ENCODE measurements at regions of chr1 and their contacts with region 1.

Region 1: DNA sequence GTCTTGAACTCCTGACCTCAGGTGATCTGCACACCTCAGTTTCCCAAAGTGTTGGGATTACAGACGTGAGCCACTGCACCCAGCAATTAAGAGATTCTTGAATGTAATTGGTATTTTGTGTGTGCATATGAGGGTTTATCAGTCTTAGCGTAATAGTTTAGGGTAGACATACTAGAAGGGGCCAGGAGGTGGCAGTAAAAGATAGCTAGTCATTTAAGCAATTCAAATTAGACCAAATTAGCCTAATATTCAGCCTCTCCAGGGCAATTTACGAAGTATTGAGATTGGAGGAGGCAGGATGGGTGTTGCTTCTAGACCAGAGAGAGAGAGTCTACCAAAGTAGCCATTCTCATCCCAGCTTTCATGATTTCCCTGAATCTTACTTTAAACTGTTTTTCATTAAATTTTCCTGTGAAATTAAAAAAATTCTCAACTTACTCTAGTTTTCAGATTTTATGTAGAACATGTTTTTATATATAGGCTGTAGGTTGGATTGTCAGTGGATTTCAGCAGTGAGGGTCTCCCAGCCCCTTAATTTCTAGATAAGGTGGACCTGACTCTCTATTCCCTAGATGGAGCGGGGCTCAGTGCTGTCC is 119.7 kb downstream of the HHAT start:
- DNase-seq: no peak
- H3K4me3 Mint-ChIP-seq: no peak overlapping the region
- H3K27ac Mint-ChIP-seq: no peak overlapping the region
- H3K4me1 Mint-ChIP-seq: peaks cover 21% of the 10 kb centered on the region
- H3K27me3 Mint-ChIP-seq: peaks cover 20% of the 10 kb centered on the region

Region 2: DNA sequence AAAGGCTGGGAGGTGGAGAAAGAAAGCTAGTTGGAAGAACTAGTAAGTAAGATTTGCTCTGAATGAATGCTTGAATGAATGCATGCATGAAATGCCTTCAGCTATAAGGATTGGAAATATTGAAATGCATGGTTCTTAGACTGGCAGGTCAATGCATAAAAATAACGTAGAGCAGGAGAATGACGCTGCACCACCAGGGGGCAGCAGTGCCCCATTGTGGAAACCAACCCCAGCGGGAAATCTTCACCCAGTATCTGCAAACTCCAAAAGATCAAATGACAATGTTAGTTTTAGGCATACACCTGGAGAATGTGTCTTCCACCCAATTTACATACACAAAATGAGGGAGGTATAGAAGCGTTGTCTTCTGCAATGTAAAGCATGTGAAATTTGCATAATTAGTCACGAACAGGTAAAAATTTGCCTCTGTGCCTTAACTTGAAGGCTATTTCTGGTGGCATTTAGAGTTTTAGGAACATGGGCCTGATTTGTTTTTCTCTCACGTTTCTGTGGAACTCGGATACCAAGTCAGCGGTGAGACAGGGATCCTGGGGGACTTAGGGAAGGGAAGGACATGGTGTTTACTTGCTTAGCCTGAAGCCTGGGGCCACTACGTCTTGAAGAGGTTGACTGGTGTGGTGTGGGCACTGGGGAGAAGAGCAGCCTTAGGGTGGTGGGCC is 41.0 kb before region 1 on chr1:
- intact Hi-C with region 1: loop called (anchors 2 kb)
- DNase-seq: peak; percentile 49
- H3K4me3 Mint-ChIP-seq: no peak overlapping the region
- H3K27ac Mint-ChIP-seq: no peak overlapping the region
- H3K4me1 Mint-ChIP-seq: no peaks in the 10 kb centered on the region
- H3K27me3 Mint-ChIP-seq: peaks cover 23% of the 10 kb centered on the region

Region 3: DNA sequence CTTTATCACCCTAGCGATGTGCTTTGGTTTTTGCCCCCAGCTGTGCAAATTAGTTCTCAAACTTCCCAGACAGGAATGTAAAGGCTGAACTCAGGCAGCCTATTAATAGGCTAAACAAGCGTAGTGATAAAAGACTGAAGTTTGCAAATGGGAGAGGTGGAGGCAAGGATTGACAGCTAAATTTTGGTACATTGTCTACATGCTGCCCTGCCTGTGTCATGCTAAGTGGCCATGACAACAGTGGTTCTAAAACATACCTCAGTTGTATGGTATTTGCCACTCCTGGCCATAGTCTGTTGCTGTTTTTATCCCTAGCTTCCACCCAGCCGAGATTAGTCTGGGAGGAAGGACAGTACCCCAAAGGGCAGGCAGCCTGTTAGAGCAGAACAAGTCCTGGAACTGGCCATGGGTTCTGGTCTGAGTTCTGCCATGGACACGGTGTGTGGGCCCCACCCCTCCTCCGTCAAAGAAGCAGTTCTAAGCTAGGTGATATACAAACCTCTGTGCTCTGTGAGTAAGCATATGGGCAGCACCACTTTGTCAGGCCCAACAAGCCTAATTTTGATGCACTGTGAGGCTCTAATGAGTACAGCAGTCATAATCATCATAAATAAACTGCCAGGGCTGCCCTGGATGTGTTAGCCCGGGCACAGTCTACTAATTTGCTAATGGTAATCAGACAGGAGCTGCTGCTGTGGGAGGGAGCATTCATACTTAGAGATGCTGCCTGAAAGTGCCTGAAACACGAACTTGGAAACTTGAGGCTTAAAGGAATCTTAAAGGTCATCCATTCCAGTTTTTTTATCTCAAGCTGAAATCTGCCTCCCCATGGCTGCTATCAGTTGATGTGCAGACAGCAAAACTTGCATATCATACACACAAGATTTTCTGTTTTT is 57.5 kb after region 1 on chr1:
- intact Hi-C with region 1: no loop called
- DNase-seq: no peak
- H3K4me3 Mint-ChIP-seq: no peak overlapping the region
- H3K27ac Mint-ChIP-seq: no peak overlapping the region
- H3K4me1 Mint-ChIP-seq: no peaks in the 10 kb centered on the region
- H3K27me3 Mint-ChIP-seq: peaks cover 1% of the 10 kb centered on the region

Region 4: GRCh38 chr1:210584439-210585113 is 136.2 kb after region 1 on chr1:
- intact Hi-C with region 1: loop called (anchors 10 kb)
- DNase-seq: peak; percentile 48
- H3K4me3 Mint-ChIP-seq: no peak overlapping the region
- H3K27ac Mint-ChIP-seq: no peak overlapping the region
- H3K4me1 Mint-ChIP-seq: no peaks in the 10 kb centered on the region
- H3K27me3 Mint-ChIP-seq: peaks cover 10% of the 10 kb centered on the region

Region 5: DNA sequence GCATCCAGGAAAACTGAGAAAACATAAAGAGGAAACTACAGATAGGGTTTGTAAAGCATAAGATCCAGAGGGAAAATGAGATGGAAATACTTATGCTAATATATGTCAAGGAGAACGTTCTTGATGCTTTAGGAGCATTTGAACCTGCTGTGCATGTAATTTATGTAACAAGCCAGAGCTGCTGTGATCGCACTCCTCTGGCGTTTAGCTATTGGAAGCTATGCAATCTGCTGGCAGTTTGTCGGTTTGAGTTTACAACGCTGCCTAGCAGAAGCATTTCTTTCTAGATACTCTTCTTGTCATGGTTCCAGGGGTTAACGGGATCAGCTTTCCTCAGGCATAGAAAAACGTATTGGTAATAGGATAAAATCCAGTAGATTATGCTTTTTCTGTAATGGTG is 502.9 kb after region 1 on chr1:
- intact Hi-C with region 1: loop called (anchors 2 kb)
- DNase-seq: no peak
- H3K4me3 Mint-ChIP-seq: no peak overlapping the region
- H3K27ac Mint-ChIP-seq: no peak overlapping the region
- H3K4me1 Mint-ChIP-seq: no peaks in the 10 kb centered on the region
- H3K27me3 Mint-ChIP-seq: no peaks in the 10 kb centered on the region

Region 6: DNA sequence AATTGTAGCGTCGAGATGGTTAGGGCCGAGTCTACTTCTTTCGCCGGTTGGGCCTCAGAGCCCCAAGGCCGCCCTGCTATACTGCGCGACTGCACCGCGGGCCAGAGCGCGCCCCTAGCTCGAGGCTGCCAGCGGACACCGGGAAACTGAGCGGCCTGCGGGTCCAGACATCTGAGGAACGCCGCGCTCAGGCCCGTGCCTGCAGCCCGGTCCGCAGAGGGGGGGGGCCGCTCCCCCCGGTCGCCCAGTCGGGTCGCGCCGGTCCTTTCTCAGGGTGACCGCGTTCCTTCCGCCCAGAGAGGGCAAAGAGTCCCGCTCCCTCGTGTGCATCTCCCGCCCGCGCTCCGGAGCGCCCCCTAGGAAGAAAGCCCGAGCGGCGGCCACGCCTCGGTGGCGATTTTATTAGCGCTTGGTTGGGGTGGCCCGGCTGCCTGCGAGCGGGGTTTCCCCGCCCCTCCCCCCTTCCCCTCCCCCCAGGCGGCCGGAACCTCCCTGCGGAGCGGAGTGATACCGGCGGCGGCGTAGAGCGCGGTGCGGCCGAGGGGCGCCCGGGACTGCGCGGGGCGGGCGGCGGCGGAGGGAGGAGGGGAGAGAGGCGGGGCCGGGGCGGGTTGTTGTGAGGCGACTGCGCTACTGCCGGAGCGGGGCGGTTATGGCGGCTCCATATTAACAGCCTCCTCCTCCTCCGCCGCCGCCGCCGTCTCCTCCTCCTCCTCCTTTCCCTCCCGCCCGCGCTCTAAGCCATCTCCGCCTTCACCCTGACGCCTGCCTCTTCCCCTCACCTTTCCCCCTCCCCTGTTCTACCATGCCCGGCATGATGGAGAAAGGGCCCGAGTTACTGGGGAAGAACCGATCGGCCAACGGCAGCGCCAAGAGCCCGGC is 810.6 kb after region 1 on chr1 and contains the start of gene RCOR3:
- intact Hi-C with region 1: loop called (anchors 5 kb)
- DNase-seq: peak; percentile 91
- H3K4me3 Mint-ChIP-seq: peak within 1 kb of the TSS; percentile 88
- H3K27ac Mint-ChIP-seq: peak within 1 kb of the TSS; percentile 92
- H3K4me1 Mint-ChIP-seq: peaks cover 19% of the 10 kb centered on the region
- H3K27me3 Mint-ChIP-seq: no peaks in the 10 kb centered on the region
- total RNA-seq, gene RCOR3: 42.3 and 45.0 TPM in 2 replicates

Measured in activated T-helper 2 cell treated with anti-CD3 and anti-CD28 coated beads, Interferon-gamma antibody, Interleukin-2, Interleukin-4, amounts not matched to agents 10 μg/mL and 5 μg/mL and 100 μg/mL, durations not matched to agents 14 hours and 24 hours and 36 hours (primary cell).